ENCODE measurements at regions of chr17 and their contacts with region 1.

Region 1: GRCh38 chr17:22374741-22375140 is 682.4 kb downstream of the KCNJ18 start:
- DNase-seq: no peak
- ATAC-seq: no peak
- H3K4me3 ChIP-seq: no peak overlapping the region
- H3K27ac ChIP-seq: no peak overlapping the region
- H3K4me1 ChIP-seq: no peaks in the 10 kb centered on the region
- H3K27me3 ChIP-seq: no peaks in the 10 kb centered on the region
- CTCF ChIP-seq: no peak
- EP300 ChIP-seq: no peak
- POLR2A ChIP-seq: no peak
- RAD21 ChIP-seq: no peak

Region 2: GRCh38 chr17:22337453-22337852 is 37.3 kb before region 1 on chr17:
- CTCF ChIA-PET with region 1: no interaction called
- POLR2A ChIA-PET with region 1: no interaction called
- in situ Hi-C with region 1: no loop called
- intact Hi-C with region 1: no loop called
- DNase-seq: no peak
- ATAC-seq: no peak
- H3K4me3 ChIP-seq: no peak overlapping the region
- H3K27ac ChIP-seq: no peak overlapping the region
- H3K4me1 ChIP-seq: 0 out of 2 replicates have a peak, but pooled peaks cover 3% of the 10 kb centered on the region
- H3K27me3 ChIP-seq: no peaks in the 10 kb centered on the region
- CTCF ChIP-seq: no peak
- EP300 ChIP-seq: no peak
- POLR2A ChIP-seq: no peak
- RAD21 ChIP-seq: no peak

Region 3: GRCh38 chr17:22409160-22409751 is 34.5 kb after region 1 on chr17:
- CTCF ChIA-PET with region 1: no interaction called
- POLR2A ChIA-PET with region 1: no interaction called
- in situ Hi-C with region 1: no loop called
- intact Hi-C with region 1: no loop called
- DNase-seq: no peak
- ATAC-seq: no peak
- H3K4me3 ChIP-seq: no peak overlapping the region
- H3K27ac ChIP-seq: no peak overlapping the region
- H3K4me1 ChIP-seq: no peaks in the 10 kb centered on the region
- H3K27me3 ChIP-seq: peaks cover 0 to 7% of the 10 kb centered on the region in 2 experiments; a peak in 1 of 5 replicates
- CTCF ChIP-seq: no peak
- EP300 ChIP-seq: no peak
- POLR2A ChIP-seq: no peak
- RAD21 ChIP-seq: no peak

Region 4: DNA sequence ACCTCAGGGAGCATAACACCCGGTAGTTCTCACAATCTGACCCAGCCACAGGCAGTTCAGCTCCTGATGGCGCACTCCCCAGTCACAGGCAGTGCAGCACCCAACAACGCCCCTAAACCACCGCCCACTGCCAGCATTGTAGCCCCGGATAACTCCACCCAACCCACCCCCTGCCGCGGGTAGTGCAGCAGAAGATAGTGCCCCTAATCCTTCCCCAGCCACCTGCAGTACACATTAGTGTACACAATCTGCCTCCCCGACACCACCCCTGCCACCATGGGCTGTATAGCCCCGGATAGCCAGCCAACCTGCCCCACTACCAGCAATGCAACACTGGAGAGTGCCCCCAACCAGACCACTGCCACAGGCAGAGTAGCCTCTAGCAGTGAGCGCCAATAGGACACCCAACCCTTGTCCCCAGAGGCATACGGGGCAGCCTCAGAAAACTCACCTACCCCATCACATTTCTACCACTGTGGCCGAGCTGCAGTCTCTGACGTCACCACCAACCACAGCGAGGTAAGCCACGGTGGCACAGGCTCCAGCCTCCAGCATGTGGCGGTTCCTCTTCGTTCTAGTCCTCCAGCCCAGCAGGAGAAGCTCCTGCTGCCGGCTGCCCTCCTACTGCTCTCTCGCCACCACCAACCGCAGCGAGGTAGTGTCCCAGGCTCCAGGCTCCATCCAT is 194.9 kb after region 1 on chr17:
- CTCF ChIA-PET with region 1: no interaction called
- POLR2A ChIA-PET with region 1: no interaction called
- in situ Hi-C with region 1: loop called (anchors 25 kb)
- intact Hi-C with region 1: no loop called
- DNase-seq: no peak
- ATAC-seq: no peak
- H3K4me3 ChIP-seq: no peak overlapping the region
- H3K27ac ChIP-seq: no peak overlapping the region
- H3K4me1 ChIP-seq: no peaks in the 10 kb centered on the region
- H3K27me3 ChIP-seq: no peaks in the 10 kb centered on the region
- CTCF ChIP-seq: no peak
- EP300 ChIP-seq: no peak
- POLR2A ChIP-seq: no peak
- RAD21 ChIP-seq: no peak

Measured in HepG2 (cell line).